Naive thymus-derived CD8-positive, alpha-beta T cell (primary cell): ENCODE measurements at regions of chr19 and their contacts with region 1.

Region 1: DNA sequence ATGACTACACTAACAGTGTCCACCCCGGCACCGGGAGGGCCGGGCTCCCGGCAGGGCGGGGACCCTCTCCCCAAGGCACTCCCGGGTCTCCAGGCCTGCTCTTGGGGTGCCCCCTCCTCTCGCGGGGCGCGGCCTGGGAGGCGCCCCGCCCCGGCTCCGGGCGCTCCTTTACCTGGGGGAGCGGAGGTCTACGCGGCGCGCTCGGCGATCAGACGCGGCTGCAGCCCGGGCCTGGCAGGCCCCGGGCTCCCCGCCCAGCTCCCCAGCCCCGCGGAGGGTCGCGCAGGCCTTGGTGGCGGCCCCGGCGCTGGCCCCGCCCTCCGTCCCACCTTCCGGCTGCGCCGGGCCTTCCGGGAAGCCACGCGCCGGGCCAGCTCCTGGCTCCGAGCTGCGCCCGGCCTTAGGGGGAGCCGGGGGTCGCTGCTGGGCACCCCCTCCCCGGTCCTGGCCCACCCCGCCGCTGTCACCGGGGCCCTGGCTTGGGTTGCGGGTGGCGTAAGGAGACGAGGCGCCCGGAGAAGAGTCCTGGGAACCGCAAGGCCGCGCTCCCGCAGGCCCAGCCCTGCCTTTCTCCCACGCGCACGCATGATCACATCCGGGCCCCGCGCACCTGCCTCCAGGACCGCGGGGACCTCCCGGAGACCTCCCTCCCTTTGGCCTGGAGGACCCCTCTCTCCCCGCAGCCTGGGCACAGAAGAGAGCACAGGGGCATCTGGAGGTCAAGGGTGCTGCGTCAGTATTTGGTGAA is at the start of gene C19orf12:
- DNase-seq: peak; percentile 37 to 84 (median 65)
- ATAC-seq: peak; percentile 60 to 65
- H3K4me3 Mint-ChIP-seq: peak within 1 kb of the TSS; percentile 87 to 98 (median 90)
- H3K27ac Mint-ChIP-seq: peak within 1 kb of the TSS; percentile 93 to 99 (median 96)
- H3K4me1 Mint-ChIP-seq: peaks cover 34 to 62% (median 56%) of the 10 kb centered on the region in 4 donors
- H3K27me3 Mint-ChIP-seq: no peaks in the 10 kb centered on the region
- polyA plus RNA-seq, gene C19orf12: 16.7 to 32.3 (median 19.8) TPM

Region 2: DNA sequence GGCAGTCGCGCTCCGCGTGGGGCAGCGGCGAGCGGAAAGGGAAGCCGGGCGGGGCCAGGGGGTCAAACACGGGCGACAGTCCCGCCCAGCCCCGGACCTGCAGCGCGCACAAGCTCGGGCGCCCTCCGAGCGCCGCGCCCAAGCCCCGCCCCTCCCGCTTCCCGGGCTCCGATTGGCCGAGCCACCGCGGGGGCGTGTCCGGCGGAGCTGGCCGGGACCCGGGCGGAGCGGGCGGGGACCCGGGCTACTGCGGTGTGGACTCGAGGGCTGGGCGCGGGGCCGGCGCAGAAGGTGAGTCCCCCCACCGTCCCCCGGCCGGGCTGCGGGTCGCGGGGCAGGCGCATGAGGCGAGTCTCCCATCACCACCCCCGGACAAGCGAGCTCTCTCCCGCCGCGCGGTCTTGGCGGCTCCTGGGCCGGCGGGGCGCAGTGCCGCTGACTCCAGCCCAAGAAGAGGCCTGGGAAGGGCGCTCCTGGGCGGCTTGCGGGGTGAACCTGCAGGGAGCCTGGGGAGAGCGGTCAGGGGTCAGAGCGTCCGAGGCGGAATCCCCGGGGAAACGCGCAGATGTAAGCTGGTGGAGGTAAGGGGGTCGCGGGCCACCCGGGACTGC is 49.8 kb before region 1 on chr19 and contains the start of gene PLEKHF1:
- POLR2A ChIA-PET with region 1: interaction called, 111 read pairs
- DNase-seq: peak; percentile 57 to 88 (median 80)
- ATAC-seq: peak; percentile 67 to 74
- H3K4me3 Mint-ChIP-seq: peak within 1 kb of the TSS; percentile 87 to 94 (median 92)
- H3K27ac Mint-ChIP-seq: peak within 1 kb of the TSS; percentile 89 to 99 (median 96)
- H3K4me1 Mint-ChIP-seq: peaks cover 27 to 74% (median 66%) of the 10 kb centered on the region in 4 donors
- H3K27me3 Mint-ChIP-seq: no peaks in the 10 kb centered on the region
- polyA plus RNA-seq, gene PLEKHF1: 3.8 to 19.7 (median 15.5) TPM

Region 3: DNA sequence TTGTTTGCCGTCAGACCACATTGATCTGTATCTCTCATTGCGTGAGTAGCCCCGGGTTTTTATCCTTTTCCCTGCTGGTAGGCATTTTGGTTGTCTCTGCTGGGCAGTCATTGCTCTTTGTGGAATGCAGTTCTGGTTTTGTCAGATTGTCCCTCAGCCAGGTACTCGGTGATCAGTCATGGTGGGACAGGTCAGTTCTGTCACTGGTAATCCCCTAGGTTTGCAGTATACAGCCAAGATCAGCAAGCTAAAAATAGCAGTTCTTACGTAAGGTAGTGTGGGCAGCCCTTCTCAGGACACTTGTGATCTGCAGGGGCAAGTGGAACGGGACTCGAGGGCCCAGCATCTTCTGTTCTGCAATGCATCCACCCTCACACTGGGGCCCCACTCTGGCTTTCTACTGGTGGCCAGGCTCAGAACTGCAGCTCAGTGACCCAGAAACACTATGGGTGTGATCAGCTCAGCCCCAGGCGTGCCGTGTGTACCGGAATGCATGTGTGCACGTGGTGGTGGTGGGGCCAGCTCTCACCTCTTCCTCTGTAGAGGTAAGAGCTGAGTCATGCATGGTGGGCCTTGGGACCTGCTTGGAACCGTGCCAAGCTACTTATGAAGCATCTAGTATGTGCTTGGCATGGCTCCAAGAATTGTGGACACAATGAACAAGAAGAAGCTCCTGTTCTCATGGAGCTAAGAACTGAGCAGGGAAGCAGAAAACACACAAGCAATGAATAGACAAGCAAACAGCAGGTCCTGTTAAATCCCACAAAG is 43.5 kb before region 1 on chr19:
- POLR2A ChIA-PET with region 1: interaction called, 111 read pairs
- DNase-seq: peak; percentile 46 to 91 (median 72)
- ATAC-seq: peak; percentile 47 to 54
- H3K4me3 Mint-ChIP-seq: peak overlapping the region; percentile 63 to 94 (median 84)
- H3K27ac Mint-ChIP-seq: peak overlapping the region; percentile 90 to 99 (median 98)
- H3K4me1 Mint-ChIP-seq: peaks cover 37 to 94% (median 88%) of the 10 kb centered on the region in 4 donors
- H3K27me3 Mint-ChIP-seq: no peaks in the 10 kb centered on the region

Region 4: GRCh38 chr19:29694669-29695627 is 20.2 kb before region 1 on chr19:
- POLR2A ChIA-PET with region 1: interaction called, 96 read pairs
- DNase-seq: peak; percentile 67 to 88 (median 82)
- ATAC-seq: peak; percentile 99
- H3K4me3 Mint-ChIP-seq: peak overlapping the region in 1 of 10 donors; percentile 24
- H3K27ac Mint-ChIP-seq: peak overlapping the region in 9 of 10 donors; percentile 4 to 92 (median 83)
- H3K4me1 Mint-ChIP-seq: peaks cover 19 to 40% (median 29%) of the 10 kb centered on the region in 4 donors
- H3K27me3 Mint-ChIP-seq: no peaks in the 10 kb centered on the region

Region 5: GRCh38 chr19:29704562-29705558 is 10.3 kb before region 1 on chr19:
- POLR2A ChIA-PET with region 1: interaction called, 28 read pairs
- DNase-seq: no peak
- ATAC-seq: peak in 1 of 2 donors; percentile 33
- H3K4me3 Mint-ChIP-seq: peak overlapping the region in 3 of 10 donors; percentile 11 to 53 (median 21)
- H3K27ac Mint-ChIP-seq: peak overlapping the region in 8 of 10 donors; percentile 22 to 82 (median 71)
- H3K4me1 Mint-ChIP-seq: peaks cover 13 to 64% (median 30%) of the 10 kb centered on the region in 4 donors
- H3K27me3 Mint-ChIP-seq: no peaks in the 10 kb centered on the region

Region 6: GRCh38 chr19:29745253-29745652 is 30.1 kb after region 1 on chr19:
- POLR2A ChIA-PET with region 1: no interaction called
- DNase-seq: no peak
- ATAC-seq: no peak
- H3K4me3 Mint-ChIP-seq: no peak overlapping the region
- H3K27ac Mint-ChIP-seq: no peak overlapping the region
- H3K4me1 Mint-ChIP-seq: no peaks in the 10 kb centered on the region
- H3K27me3 Mint-ChIP-seq: peaks cover 0 to 6% (median 3%) of the 10 kb centered on the region in 5 donors

Region 7: GRCh38 chr19:29761575-29762232 is 46.6 kb after region 1 on chr19:
- POLR2A ChIA-PET with region 1: no interaction called
- DNase-seq: no peak
- ATAC-seq: no peak
- H3K4me3 Mint-ChIP-seq: no peak overlapping the region
- H3K27ac Mint-ChIP-seq: peak overlapping the region in 1 of 10 donors; percentile 24
- H3K4me1 Mint-ChIP-seq: no peaks in the 10 kb centered on the region
- H3K27me3 Mint-ChIP-seq: no peaks in the 10 kb centered on the region

Region 8: GRCh38 chr19:29807870-29808405 is 92.8 kb after region 1 on chr19:
- POLR2A ChIA-PET with region 1: no interaction called
- DNase-seq: no peak
- ATAC-seq: no peak
- H3K4me3 Mint-ChIP-seq: no peak overlapping the region
- H3K27ac Mint-ChIP-seq: peak overlapping the region in 1 of 10 donors; percentile 39
- H3K4me1 Mint-ChIP-seq: peaks cover 6 to 14% (median 10%) of the 10 kb centered on the region in 4 donors
- H3K27me3 Mint-ChIP-seq: no peaks in the 10 kb centered on the region

Region 9: DNA sequence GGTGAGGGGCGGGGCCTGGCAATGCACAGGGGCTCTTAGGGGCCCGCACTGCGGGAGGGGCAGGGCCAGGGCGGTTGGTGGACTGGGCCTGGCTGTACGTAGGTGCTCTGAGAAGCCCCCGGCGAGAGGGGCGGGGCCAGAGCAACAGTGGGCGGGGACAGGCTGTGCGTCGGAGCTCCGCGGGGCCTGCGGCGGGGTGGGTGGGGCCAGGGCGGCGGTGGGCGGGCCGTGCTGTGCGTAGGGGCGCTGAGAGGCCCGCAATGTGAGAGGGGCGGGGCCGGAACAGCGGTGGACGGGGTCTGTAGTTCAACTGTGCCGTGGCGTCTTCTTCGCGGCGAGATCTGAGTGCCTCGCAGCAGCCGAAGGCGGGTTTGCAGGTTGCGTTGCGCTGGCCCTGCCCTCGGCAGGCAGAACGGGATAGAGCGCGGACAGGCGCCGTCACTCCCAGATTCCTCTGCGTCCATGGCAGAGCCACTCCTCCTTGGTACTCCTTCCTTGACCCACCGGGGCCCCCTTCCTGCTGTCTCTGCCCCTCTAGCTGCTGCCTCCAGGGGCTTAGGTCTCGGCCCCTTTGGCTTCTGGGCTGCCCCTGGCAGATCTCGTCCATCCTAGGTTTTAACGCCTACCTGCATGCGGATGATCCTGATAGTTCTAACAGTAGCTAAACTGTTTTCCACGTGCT is 129.9 kb after region 1 on chr19:
- POLR2A ChIA-PET with region 1: interaction called, 10 read pairs
- DNase-seq: peak in 9 of 10 donors; percentile 95 to 99 (median 97)
- ATAC-seq: peak; percentile 81 to 83
- H3K4me3 Mint-ChIP-seq: peak overlapping the region; percentile 89 to 98 (median 95)
- H3K27ac Mint-ChIP-seq: peak overlapping the region; percentile 91 to 98 (median 96)
- H3K4me1 Mint-ChIP-seq: peaks cover 11 to 14% (median 12%) of the 10 kb centered on the region in 4 donors
- H3K27me3 Mint-ChIP-seq: peaks cover 0 to 8% (median 0%) of the 10 kb centered on the region in 5 donors